ENCODE measurements at regions of chr12 and their contacts with region 1.

Region 1: DNA sequence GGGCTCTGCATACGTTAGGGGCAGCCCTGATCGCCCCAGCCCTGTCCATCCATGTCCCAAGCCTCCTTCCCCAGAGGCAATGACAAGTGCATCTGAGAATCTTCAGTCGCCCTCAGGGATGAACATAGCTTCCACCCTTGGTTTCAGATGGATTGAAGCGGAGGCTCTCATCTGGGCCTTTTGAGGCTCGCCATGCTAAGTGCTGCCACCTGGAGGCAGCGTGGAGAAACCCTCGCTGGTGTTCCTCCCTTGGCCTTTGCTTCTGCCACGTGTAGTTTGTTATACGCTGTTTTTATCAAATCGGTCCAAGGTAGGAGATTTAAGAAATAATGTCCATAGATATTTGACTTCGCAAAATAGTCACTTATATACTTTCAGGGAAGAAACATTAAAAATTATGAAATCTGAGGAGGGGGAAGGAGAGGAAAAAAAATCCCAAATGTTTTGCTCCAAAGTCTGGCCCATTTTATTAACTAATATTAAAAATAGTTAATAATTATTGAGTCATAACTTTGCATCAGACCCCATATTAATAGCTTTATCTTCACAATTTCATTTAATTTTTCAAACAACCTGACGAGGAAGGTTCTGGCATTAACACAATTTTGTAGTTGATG is 28.8 kb upstream of the LRRC10 start:
- H3K4me3 ChIP-seq: no peak overlapping the region
- H3K27ac ChIP-seq: no peak overlapping the region
- H3K4me1 ChIP-seq: no peaks in the 10 kb centered on the region
- CTCF ChIP-seq: peak; percentile 36; the same call in 1 of the 2 replicates

Region 2: DNA sequence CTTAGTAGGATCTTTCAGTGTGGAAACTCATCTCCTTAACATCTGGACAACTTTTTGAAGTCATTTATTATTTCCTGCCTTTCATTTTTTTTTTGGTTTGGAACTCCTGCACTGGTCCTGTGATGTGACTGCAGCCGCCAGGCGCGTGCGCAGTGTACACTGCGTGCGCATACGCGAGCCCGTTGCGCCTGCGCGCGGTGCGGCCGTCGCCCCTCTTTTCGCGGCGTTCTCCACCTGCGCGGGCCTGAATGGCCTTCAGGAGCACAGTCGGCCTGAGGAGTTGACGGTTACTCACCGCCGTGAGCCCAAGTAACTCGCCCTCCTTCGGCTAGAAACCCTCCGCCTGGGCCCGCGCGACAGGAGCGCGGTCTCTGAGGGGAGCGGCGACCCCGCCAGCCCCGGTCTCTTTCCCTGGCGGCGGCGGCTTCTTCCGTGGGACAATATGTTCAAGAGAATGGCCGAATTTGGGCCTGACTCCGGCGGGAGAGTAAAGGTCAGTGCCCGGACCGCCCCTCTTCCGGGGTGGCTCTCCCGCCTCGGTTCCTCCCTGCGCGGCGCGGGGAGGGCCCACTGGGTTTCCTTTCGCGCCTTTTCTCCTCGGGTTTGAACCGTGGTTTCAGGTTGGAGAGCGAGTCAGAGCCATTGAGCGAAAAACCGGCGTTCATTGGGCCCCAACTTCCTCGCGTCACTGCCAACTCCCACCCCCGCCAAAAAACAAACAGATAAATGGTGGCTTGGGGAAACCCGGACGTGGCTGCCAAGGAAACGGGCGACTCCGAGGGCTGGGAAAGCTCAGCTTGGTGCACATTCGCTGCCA is 279.8 kb before region 1 on chr12 and contains the start of gene YEATS4:
- CTCF ChIA-PET with region 1: interaction called, 16 read pairs
- POLR2A ChIA-PET with region 1: no interaction called
- H3K4me3 ChIP-seq: peak within 1 kb of the TSS; percentile 97
- H3K27ac ChIP-seq: peak within 1 kb of the TSS; percentile 98
- H3K4me1 ChIP-seq: peaks cover 3% of the 10 kb centered on the region; the same call in 1 of the 2 replicates
- CTCF ChIP-seq: no peak

Region 3: GRCh38 chr12:69623970-69624369 is 15.5 kb before region 1 on chr12:
- CTCF ChIA-PET with region 1: interaction called, 33 read pairs
- POLR2A ChIA-PET with region 1: no interaction called
- H3K4me3 ChIP-seq: no peak overlapping the region
- H3K27ac ChIP-seq: no peak overlapping the region
- H3K4me1 ChIP-seq: no peaks in the 10 kb centered on the region
- CTCF ChIP-seq: no peak

Region 4: DNA sequence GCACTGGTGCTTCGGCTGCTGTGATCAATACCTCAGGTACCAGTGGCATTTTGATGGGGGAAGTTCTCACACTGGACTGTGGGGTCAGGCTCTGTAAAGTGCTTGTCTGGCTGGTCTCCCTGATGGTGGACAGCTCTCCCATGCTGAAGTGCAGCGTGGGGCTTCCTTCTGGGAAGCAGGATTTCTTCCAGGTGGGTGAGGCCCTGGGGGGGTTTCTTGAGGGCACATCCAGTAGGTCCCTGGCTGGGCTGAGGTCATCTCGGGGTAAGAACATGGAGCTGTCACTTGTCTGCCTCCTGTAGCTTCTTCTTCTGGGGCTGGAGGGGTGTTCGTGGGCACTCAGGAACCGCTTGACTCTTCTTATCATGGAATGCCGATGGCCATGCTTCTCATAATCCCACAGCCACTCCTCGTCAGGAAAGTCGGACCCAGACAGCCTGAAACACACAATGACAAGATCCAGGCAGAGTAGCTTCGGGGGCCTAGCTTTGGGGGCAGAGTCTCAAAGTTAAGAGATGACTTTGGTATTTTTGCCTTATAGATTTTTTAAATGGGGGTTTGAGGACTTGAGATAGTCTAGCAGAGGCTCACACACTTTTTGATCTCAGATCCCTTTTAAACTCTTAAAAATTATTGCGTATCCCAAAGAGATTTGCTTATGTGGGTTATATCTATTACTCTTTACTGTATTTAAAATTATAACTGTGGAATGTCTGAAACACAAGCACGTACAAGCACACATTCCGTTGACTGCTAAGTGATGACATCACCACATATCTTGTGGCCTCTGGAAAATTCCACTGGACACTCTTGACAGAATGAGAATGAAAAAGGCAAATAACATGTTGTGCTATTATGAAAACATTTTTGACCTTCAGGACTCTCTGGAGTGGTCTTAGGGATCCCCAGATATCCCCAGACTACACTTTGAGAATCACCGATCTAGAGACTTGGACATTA is 16.1 kb after region 1 on chr12:
- CTCF ChIA-PET with region 1: interaction called, 24 read pairs
- POLR2A ChIA-PET with region 1: no interaction called
- H3K4me3 ChIP-seq: no peak overlapping the region
- H3K27ac ChIP-seq: no peak overlapping the region
- H3K4me1 ChIP-seq: no peaks in the 10 kb centered on the region
- CTCF ChIP-seq: no peak

Region 5: GRCh38 chr12:69662764-69663163 is 23.3 kb after region 1 on chr12:
- CTCF ChIA-PET with region 1: interaction called, 24 read pairs
- POLR2A ChIA-PET with region 1: no interaction called
- H3K4me3 ChIP-seq: no peak overlapping the region
- H3K27ac ChIP-seq: no peak overlapping the region
- H3K4me1 ChIP-seq: no peaks in the 10 kb centered on the region
- CTCF ChIP-seq: no peak

Measured in HEK293 (cell line).